OCI-LY7 (cell line): ENCODE measurements at regions of chr14 and their contacts with region 1.

Region 1: DNA sequence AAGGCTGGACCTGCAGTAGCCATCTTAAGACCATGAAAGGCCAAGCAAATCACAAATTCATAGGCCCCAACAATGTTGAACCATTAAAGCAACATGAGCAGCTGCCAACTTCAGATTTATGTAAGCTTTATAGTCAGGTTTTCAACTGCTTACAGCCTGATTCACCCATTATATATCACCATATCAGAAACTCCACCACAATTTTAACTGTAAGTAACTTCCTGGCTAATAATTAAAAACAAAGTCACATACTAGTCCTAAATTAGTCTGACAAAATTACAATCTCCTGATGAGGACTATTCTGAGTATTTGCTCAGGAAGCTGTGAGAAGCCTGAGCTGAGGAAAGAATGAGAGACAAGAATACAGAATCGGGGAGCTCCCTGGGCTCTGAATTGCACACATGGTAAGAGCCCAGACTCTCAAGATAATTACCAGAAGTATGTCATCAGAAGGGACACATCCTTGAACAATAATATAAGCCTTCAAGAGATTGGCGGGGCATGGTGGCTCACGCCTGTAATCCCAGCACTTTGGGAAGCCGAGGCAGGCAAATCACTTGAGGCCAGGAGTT is 55.1 kb downstream of the NUMB start:
- DNase-seq: no peak
- H3K4me3 ChIP-seq: no peak overlapping the region
- H3K27ac ChIP-seq: peak overlapping the region; percentile 15
- H3K4me1 ChIP-seq: peaks cover 29% of the 10 kb centered on the region
- CTCF ChIP-seq: no peak

Region 2: DNA sequence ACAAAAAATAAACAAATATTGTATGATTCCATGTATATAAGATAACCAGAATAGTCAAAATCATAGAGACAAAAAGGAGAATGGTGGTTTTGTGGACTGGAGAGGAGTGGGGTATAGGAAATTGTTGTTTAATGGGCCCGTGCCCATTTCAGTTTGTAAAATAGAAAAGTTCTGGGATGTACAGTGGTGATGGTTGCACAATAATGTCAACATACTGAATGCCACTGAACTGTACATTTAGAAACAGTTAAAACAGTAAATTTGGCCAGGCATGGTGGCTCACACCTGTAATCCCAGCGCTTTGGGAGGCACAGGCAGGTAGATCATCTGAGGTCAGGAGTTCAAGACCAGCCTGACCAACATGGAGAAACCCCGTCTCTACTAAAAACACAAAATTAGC is 15.0 kb after region 1 on chr14:
- CTCF ChIA-PET with region 1: no interaction called
- POLR2A ChIA-PET with region 1: interaction called, 20 read pairs
- intact Hi-C with region 1: no loop called
- DNase-seq: no peak
- H3K4me3 ChIP-seq: no peak overlapping the region
- H3K27ac ChIP-seq: no peak overlapping the region
- H3K4me1 ChIP-seq: peaks cover 39% of the 10 kb centered on the region
- CTCF ChIP-seq: no peak